Pancreas (tissue), 10 donors: ENCODE measurements at regions of chr20 and their contacts with region 1.

Region 1: DNA sequence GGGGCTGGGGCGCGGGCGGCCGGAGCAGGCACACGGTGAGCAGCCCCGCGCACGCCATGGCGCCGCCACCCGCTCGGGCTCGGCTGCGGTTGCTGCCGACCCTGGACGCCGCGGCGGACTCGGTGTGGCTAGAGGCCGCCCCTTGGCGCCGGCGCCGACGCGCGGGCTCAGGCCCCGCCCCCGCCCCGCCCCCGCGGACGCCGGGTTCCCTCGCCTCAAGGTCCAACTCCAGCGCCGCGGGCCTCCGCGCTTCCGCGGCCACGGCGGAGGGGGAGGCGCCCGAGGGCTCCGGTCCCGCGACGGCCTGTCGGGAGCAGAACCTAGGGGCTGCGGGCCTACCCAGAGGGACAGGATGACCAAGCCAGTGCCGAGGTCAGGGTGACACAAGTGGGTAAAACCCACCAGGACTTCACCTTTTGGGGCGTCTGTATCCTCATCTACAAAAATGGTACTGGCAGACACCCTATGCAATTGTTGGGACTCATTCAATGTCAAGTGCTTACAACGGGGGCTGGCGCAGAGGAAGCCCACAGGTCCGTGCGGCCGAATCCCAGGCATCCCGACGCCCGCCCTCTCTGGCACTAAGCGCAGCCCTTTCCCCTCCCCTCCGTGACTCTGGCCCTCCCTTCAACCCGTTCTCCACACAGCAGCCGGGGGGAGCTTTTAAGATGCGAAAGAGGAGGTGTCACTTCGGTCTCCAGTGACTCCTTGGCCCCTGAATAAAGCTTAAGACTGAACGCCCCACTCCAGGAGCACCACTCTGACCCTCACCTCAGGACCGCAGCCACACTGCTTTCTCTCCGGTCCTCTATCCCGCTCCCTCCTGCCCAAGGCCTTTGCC is at the start of gene NECAB3:
- DNase-seq: peak; percentile 74 to 95 (median 88)
- ATAC-seq: peak; percentile 90 to 94 (median 92)
- H3K4me3 ChIP-seq: peak within 1 kb of the TSS; percentile 58 to 73 (median 72)
- H3K27ac ChIP-seq: peak within 1 kb of the TSS in 3 of 4 donors; percentile 45 to 59 (median 55)
- H3K4me1 ChIP-seq: peaks cover 0 to 9% (median 0%) of the 10 kb centered on the region in 3 donors
- H3K27me3 ChIP-seq: no peaks in the 10 kb centered on the region
- CTCF ChIP-seq: no peak
- total RNA-seq, gene NECAB3: 15.8 to 22.4 (median 18.8) TPM

Region 2: GRCh38 chr20:33437141-33437911 is 237.2 kb before region 1 on chr20:
- intact Hi-C with region 1: no loop called
- DNase-seq: peak in 3 of 6 donors; percentile 28 to 43 (median 41)
- ATAC-seq: peak in 2 of 4 donors; percentile 21 to 36
- H3K4me3 ChIP-seq: no peak overlapping the region
- H3K27ac ChIP-seq: no peak overlapping the region
- H3K4me1 ChIP-seq: no peaks in the 10 kb centered on the region
- H3K27me3 ChIP-seq: no peaks in the 10 kb centered on the region
- CTCF ChIP-seq: no peak

Region 3: GRCh38 chr20:33450867-33451266 is 223.6 kb before region 1 on chr20:
- intact Hi-C with region 1: loop called in 1 of 3 experiments (anchors 5 kb)
- DNase-seq: peak in 1 of 6 donors; percentile 19
- ATAC-seq: peak in 1 of 4 donors; percentile 51
- H3K4me3 ChIP-seq: no peak overlapping the region
- H3K27ac ChIP-seq: no peak overlapping the region
- H3K4me1 ChIP-seq: no peaks in the 10 kb centered on the region
- H3K27me3 ChIP-seq: no peaks in the 10 kb centered on the region
- CTCF ChIP-seq: no peak

Region 4: GRCh38 chr20:33609504-33609903 is 65.0 kb before region 1 on chr20:
- intact Hi-C with region 1: no loop called
- DNase-seq: no peak
- ATAC-seq: no peak
- H3K4me3 ChIP-seq: no peak overlapping the region
- H3K27ac ChIP-seq: no peak overlapping the region
- H3K4me1 ChIP-seq: no peaks in the 10 kb centered on the region
- H3K27me3 ChIP-seq: no peaks in the 10 kb centered on the region
- CTCF ChIP-seq: no peak

Region 5: DNA sequence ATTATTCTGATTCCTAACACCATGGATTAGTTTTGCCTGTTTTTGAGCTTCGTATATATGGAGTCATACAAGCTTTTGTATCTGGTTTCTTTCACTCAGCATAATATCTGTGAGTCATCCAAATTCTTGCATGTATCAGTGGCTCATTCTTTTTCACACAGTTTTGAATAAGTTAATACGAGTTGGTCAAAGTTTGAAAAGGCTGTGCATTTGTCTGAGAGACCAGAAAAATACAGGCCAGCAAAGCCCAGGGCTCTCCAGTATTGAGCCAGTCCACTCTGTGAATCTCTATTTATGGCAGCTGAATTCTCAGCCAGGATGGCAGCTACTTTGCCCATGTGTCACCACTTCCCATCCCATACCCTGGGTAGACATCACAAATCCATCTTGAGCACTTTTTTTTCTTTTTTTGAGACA is 129.4 kb after region 1 on chr20:
- intact Hi-C with region 1: loop called in 1 of 3 experiments (anchors 10 kb)
- DNase-seq: no peak
- ATAC-seq: peak in 1 of 4 donors; percentile 35
- H3K4me3 ChIP-seq: no peak overlapping the region
- H3K27ac ChIP-seq: no peak overlapping the region
- H3K4me1 ChIP-seq: no peaks in the 10 kb centered on the region
- H3K27me3 ChIP-seq: no peaks in the 10 kb centered on the region
- CTCF ChIP-seq: no peak

Region 6: DNA sequence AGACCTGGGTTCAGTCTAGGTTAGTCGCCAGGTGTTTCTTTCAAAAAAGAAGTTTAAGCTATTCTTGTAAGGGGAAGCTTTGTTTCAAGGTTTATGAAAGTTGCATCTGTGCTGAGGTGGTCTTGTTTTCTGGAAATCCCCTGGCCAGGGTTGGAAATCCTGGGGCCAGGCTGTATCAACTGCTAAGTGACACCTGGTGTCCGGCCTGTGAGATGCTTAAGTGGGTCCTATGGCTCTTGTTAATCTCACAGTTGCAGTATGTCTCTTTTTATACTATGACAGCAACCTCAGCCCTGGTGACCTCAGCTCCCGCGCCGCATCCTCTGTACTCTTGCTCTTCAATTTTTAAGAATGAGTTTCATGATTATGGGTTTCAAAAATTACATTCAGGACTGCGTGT is 208.6 kb after region 1 on chr20:
- intact Hi-C with region 1: no loop called
- DNase-seq: no peak
- ATAC-seq: no peak
- H3K4me3 ChIP-seq: no peak overlapping the region
- H3K27ac ChIP-seq: no peak overlapping the region
- H3K4me1 ChIP-seq: no peaks in the 10 kb centered on the region
- H3K27me3 ChIP-seq: no peaks in the 10 kb centered on the region
- CTCF ChIP-seq: no peak